Endothelial cell of umbilical vein (primary cell): ENCODE measurements at regions of chr12 and their contacts with region 1.

Region 1: GRCh38 chr12:30806989-30807694 is 52.4 kb upstream of the CAPRIN2 start:
- DNase-seq: peak; percentile 78
- H3K4me3 ChIP-seq: no peak overlapping the region
- H3K27ac ChIP-seq: no peak overlapping the region
- H3K4me1 ChIP-seq: no peaks in the 10 kb centered on the region
- H3K27me3 ChIP-seq: no peaks in the 10 kb centered on the region
- CTCF ChIP-seq: peak; percentile 54
- POLR2A ChIP-seq: no peak

Region 2: DNA sequence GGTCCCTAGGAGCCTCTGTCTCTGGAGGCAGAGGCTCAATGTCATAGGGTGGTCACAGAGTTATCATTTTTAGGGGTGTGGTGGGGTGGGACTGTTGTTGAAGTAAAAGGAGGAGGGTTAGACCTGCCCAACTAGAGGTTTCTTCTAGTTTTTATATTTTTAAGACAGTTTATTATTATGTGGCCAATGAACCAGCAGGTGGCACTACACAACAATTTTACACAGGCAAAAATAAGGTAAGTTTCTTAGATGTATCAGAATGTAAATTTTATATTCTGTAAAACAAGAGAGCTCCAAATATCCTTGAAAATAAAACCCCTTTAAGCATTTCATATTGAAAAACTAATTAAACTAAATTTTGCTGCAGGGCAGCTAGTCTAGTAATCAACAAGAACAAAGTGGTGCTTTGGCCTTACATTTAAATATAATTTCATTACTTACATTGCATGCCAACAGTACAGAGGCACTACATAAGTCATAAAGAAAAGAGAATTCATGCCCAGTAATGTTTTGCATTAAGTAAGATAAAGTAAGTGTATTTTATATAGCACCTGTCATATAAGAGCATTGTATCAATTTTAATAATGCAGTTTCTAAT is 1287.5 kb before region 1 on chr12:
- CTCF ChIA-PET with region 1: interaction called, 26 read pairs
- POLR2A ChIA-PET with region 1: no interaction called
- dilution Hi-C with region 1: no loop called
- intact Hi-C with region 1: loop called (anchors 1 kb)
- DNase-seq: peak; percentile 75
- H3K4me3 ChIP-seq: no peak overlapping the region
- H3K27ac ChIP-seq: no peak overlapping the region
- H3K4me1 ChIP-seq: no peaks in the 10 kb centered on the region
- H3K27me3 ChIP-seq: no peaks in the 10 kb centered on the region
- CTCF ChIP-seq: peak; percentile 21 to 33
- POLR2A ChIP-seq: no peak

Region 3: GRCh38 chr12:29782285-29782870 is 1024.8 kb before region 1 on chr12:
- CTCF ChIA-PET with region 1: no interaction called
- POLR2A ChIA-PET with region 1: no interaction called
- dilution Hi-C with region 1: no loop called
- intact Hi-C with region 1: loop called (anchors 5 kb)
- DNase-seq: peak; percentile 63
- H3K4me3 ChIP-seq: peak overlapping the region; percentile 32 to 71 (median 60)
- H3K27ac ChIP-seq: no peak overlapping the region
- H3K4me1 ChIP-seq: peaks cover 16% of the 10 kb centered on the region
- H3K27me3 ChIP-seq: peaks cover 4 to 15% of the 10 kb centered on the region in 2 experiments
- CTCF ChIP-seq: no peak
- POLR2A ChIP-seq: no peak

Region 4: DNA sequence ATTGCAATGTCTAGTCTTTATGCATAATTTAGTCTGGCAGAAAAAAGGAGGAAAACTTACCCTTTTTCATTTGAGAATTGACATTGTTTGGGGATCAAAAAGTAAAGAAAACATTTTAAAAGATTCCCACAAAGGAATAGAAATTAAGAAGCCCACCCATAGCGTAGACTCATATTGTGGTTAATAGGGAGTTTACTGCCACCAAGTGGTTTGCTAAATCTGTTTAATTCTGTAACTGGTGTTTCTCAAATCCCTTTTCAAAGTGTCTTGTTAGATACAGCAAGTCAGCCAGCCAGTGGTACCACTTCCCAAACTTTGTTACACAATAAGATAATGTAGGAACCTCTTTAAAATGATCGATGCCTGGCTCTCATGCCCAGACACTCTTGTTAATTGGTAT is 291.8 kb before region 1 on chr12:
- CTCF ChIA-PET with region 1: no interaction called
- POLR2A ChIA-PET with region 1: no interaction called
- dilution Hi-C with region 1: no loop called
- intact Hi-C with region 1: loop called (anchors 5 kb)
- DNase-seq: peak; percentile 26
- H3K4me3 ChIP-seq: no peak overlapping the region
- H3K27ac ChIP-seq: no peak overlapping the region
- H3K4me1 ChIP-seq: no peaks in the 10 kb centered on the region
- H3K27me3 ChIP-seq: no peaks in the 10 kb centered on the region
- CTCF ChIP-seq: peak in 1 of 2 donors; percentile 5
- POLR2A ChIP-seq: no peak

Region 5: GRCh38 chr12:30725739-30726138 is 81.4 kb before region 1 on chr12:
- CTCF ChIA-PET with region 1: no interaction called
- POLR2A ChIA-PET with region 1: no interaction called
- dilution Hi-C with region 1: no loop called
- intact Hi-C with region 1: loop called (anchors 2 kb)
- DNase-seq: peak; percentile 73
- H3K4me3 ChIP-seq: no peak overlapping the region
- H3K27ac ChIP-seq: peak overlapping the region; percentile 28
- H3K4me1 ChIP-seq: peaks cover 18% of the 10 kb centered on the region
- H3K27me3 ChIP-seq: no peaks in the 10 kb centered on the region
- CTCF ChIP-seq: no peak
- POLR2A ChIP-seq: no peak

Region 6: GRCh38 chr12:30795410-30796312 is 11.5 kb before region 1 on chr12:
- CTCF ChIA-PET with region 1: interaction called, 10 read pairs
- POLR2A ChIA-PET with region 1: no interaction called
- dilution Hi-C with region 1: no loop called
- intact Hi-C with region 1: no loop called
- DNase-seq: peak; percentile 80
- H3K4me3 ChIP-seq: peak overlapping the region; percentile 16 to 76 (median 56)
- H3K27ac ChIP-seq: peak overlapping the region; percentile 97
- H3K4me1 ChIP-seq: peaks cover 39% of the 10 kb centered on the region
- H3K27me3 ChIP-seq: no peaks in the 10 kb centered on the region
- CTCF ChIP-seq: peak in 1 of 2 donors; percentile 14
- POLR2A ChIP-seq: peak; percentile 83

Region 7: DNA sequence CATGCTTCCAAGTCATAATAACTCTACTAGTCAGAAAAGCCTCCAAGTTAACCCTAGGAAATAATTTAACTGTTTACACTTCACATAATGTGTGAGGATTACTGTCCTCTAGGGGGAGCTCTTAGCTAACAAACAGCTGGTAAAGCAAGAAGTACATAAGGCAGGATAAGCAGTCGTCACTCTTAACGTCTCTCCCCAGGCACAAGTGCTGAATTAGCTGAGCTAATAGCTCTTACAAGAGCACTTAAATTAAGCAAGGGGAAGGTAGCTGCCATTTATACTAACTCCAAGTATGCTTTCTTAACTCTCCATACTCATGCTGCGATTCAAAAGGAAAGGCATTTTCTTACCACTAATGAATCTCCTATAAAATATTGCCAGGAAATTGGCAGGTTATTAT is 40.1 kb after region 1 on chr12:
- CTCF ChIA-PET with region 1: no interaction called
- POLR2A ChIA-PET with region 1: no interaction called
- dilution Hi-C with region 1: no loop called
- intact Hi-C with region 1: no loop called
- DNase-seq: peak; percentile 59
- H3K4me3 ChIP-seq: no peak overlapping the region
- H3K27ac ChIP-seq: no peak overlapping the region
- H3K4me1 ChIP-seq: peaks cover 6% of the 10 kb centered on the region
- H3K27me3 ChIP-seq: peaks cover 3 to 5% of the 10 kb centered on the region in 2 experiments
- CTCF ChIP-seq: peak; percentile 45 to 46
- POLR2A ChIP-seq: no peak